ENCODE measurements at regions of chr4 and their contacts with region 1.

Region 1: GRCh38 chr4:80989921-80990544 is 40.5 kb upstream of the BMP3 start:
- DNase-seq: peak; percentile 27
- H3K4me3 ChIP-seq: no peak overlapping the region
- H3K27ac ChIP-seq: no peak overlapping the region
- H3K27me3 ChIP-seq: no peaks in the 10 kb centered on the region
- CTCF ChIP-seq: peak; percentile 74

Region 2: DNA sequence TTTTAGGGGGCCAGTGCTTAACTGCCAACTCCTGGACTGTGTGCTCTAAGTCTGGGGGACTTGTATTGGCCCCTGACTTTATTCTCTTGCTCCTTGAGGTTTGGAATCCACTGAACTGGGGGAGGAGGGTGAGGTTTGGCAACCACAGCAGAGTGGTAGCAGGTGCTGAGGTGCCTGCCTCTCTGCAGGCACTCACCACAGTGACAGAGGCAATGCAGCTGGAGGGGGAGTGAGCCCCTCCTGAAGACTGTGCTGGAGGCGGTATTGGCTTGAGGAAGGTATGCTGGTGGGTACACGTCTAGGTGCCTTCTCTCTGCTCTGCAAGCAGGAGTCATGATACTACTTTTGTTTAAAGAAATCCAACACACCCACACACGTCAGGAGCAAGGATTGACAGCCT is 629.9 kb before region 1 on chr4:
- CTCF ChIA-PET with region 1: interaction called, 231 read pairs
- POLR2A ChIA-PET with region 1: no interaction called
- DNase-seq: no peak
- H3K4me3 ChIP-seq: no peak overlapping the region
- H3K27ac ChIP-seq: no peak overlapping the region
- H3K27me3 ChIP-seq: no peaks in the 10 kb centered on the region
- CTCF ChIP-seq: no peak

Region 3: GRCh38 chr4:81003597-81004111 is 13.6 kb after region 1 on chr4:
- CTCF ChIA-PET with region 1: interaction called, 10 read pairs
- POLR2A ChIA-PET with region 1: no interaction called
- DNase-seq: no peak
- H3K4me3 ChIP-seq: no peak overlapping the region
- H3K27ac ChIP-seq: no peak overlapping the region
- H3K27me3 ChIP-seq: peaks cover 12% of the 10 kb centered on the region
- CTCF ChIP-seq: no peak

Region 4: DNA sequence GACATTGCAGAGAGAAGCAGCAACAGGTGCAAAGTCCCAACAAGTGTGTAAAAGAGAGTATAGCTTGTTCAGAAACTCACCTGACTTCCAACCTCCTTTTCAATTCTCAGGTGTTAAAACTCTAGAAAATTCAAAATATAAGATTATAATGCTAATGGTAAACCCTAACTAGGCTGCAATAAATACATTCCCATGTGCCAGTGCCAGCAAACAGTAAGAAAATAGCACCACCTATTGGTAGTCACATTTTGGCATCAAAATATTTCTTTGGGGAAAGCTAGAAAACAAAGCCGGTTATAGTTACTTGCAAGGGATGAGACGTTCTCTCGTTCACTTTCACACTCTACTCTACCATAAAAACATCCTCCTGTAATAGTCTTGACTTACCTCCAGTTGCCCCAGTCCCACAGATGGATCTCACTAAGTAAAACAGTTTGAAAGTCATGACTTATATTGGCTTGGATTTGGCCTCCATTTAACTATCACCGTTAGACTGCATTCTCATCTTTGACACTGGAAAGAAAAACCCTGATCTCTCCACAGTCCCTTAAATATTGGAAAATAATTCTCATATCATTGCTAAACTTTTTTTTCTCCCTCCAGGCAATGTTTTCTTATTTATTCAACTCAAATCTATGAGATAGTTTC is 50.1 kb after region 1 on chr4:
- CTCF ChIA-PET with region 1: interaction called, 22 read pairs
- POLR2A ChIA-PET with region 1: no interaction called
- DNase-seq: no peak
- H3K4me3 ChIP-seq: no peak overlapping the region
- H3K27ac ChIP-seq: no peak overlapping the region
- H3K27me3 ChIP-seq: peaks cover 3% of the 10 kb centered on the region
- CTCF ChIP-seq: peak; percentile 79

Region 5: DNA sequence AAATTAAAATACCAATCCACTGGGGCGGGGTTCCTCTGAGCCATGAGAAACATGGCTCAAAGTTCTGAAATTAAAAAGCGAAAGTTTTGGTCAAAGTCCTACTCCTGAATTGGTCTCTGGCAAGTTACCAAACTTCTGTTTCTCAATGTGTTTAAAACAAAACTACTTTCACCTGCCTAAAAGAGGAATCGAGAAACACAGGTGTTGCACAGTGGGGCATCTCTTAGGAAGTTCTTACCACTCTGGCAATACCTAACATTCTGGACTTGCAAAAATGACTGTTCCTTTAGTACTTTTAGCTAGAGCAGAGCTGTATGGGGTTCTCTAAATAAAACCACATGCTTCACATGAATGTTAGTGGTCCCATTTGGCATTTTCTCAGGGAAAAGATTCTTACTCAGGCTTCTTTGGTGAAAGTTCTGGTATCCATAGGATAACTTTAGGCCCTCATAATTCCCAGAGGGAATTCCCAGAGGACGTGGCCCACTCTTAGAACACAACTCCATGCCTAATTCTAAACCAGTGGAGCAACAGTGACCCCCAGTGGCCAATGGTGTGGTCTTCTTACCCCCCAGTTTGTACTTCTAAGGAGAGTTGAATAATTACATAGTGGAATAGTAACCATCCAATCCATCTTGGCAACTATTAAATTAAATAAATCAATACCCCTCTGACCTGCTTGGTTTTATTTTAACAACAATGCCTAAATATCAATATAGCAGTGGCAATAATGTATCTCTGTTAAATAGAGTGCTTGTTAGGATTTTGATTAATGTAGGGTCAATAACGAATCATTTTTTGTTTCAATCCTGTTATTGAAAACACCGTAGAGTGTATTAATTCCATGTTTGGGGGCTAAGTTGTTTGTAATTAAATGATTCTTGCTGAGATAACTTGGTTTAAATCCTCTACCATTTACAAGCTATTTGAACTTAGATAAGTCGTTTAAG is 62.4 kb after region 1 on chr4:
- CTCF ChIA-PET with region 1: interaction called, 23 read pairs
- POLR2A ChIA-PET with region 1: no interaction called
- DNase-seq: peak; percentile 34
- H3K4me3 ChIP-seq: no peak overlapping the region
- H3K27ac ChIP-seq: no peak overlapping the region
- H3K27me3 ChIP-seq: peaks cover 16% of the 10 kb centered on the region
- CTCF ChIP-seq: peak; percentile 84